HEK293 (cell line): ENCODE measurements at regions of chr17 and their contacts with region 1.

Region 1: GRCh38 chr17:38982858-38983746 is 15.9 kb upstream of the FBXO47 start:
- H3K4me3 ChIP-seq: no peak overlapping the region
- H3K27ac ChIP-seq: no peak overlapping the region
- H3K4me1 ChIP-seq: peaks cover 6% of the 10 kb centered on the region
- CTCF ChIP-seq: peak; percentile 63; the same call in 1 of the 2 replicates

Region 2: GRCh38 chr17:38868817-38869525 is 114.1 kb before region 1 on chr17:
- CTCF ChIA-PET with region 1: interaction called, 24 read pairs
- POLR2A ChIA-PET with region 1: interaction called, 20 read pairs
- H3K4me3 ChIP-seq: peak overlapping the region; percentile 94
- H3K27ac ChIP-seq: peak overlapping the region; percentile 96
- H3K4me1 ChIP-seq: peaks cover 9% of the 10 kb centered on the region
- CTCF ChIP-seq: peak; percentile 93

Region 3: DNA sequence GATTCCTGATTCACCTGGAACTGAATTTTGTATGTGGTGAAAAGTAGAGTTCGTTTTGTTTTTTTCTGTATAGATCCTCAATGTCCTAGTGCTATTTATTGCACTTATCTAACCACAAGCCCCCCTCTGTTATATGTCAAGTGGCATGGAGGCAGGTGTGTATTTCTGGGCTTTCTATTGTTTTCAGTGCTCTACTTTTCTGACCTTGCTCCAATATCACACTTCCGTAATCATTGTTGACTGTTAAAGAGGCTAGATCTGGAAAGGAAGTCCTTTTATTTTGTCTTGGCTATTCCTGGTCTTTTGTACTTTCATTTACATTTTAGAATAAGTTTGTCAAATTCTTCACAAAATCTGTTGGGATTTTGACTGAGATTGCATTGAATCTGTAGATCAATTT is 10.9 kb after region 1 on chr17:
- CTCF ChIA-PET with region 1: interaction called, 26 read pairs
- POLR2A ChIA-PET with region 1: no interaction called
- H3K4me3 ChIP-seq: no peak overlapping the region
- H3K27ac ChIP-seq: no peak overlapping the region
- H3K4me1 ChIP-seq: no peaks in the 10 kb centered on the region
- CTCF ChIP-seq: no peak

Region 4: DNA sequence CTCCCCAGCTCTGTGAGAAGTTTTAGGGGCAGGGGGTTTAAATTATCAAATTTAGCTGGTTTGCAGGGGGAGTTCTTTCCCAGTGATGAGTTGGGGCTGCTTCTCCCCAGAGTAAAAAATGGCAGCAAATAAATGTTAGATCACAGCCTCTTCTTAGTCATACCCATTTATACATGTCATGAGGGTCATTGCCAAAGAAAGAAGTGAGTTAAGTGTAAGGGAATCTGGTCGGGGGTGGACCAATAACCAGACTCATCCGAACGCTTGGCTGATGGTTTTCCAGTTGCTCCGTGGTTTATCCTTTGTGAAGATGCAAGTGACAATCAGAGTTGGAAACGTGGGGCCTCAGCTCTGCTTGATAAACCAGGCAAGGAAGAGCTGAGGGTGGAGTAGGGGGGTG is 81.3 kb after region 1 on chr17:
- CTCF ChIA-PET with region 1: interaction called, 20 read pairs
- POLR2A ChIA-PET with region 1: no interaction called
- H3K4me3 ChIP-seq: no peak overlapping the region
- H3K27ac ChIP-seq: no peak overlapping the region
- H3K4me1 ChIP-seq: peaks cover 19% of the 10 kb centered on the region
- CTCF ChIP-seq: no peak

Region 5: DNA sequence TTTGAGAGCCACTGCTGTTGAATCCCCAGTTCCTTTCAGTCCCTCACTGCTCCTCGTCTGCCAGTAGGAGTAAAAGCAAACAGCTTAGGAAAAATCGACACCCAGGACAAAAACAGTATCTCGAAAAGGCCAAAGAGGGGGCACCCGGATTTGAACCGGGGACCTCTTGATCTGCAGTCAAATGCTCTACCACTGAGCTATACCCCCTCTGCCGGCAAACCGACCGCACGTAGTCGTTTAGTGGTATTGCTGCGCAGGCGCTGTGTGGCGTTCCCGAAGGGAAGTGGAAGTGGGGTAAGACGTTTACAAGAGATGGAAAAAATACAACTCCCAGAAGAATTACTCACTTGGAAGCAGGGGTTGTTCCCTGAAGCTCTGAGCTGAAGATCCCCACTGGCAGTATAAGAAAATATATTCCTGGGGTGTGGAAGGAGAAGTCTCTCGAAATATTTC is 170.5 kb after region 1 on chr17:
- CTCF ChIA-PET with region 1: interaction called, 266 read pairs
- POLR2A ChIA-PET with region 1: interaction called, 37 read pairs
- H3K4me3 ChIP-seq: peak overlapping the region; percentile 62
- H3K27ac ChIP-seq: peak overlapping the region; percentile 79
- H3K4me1 ChIP-seq: peaks cover 3% of the 10 kb centered on the region
- CTCF ChIP-seq: 0 out of 2 replicates have a peak, but pooled peaks have one; percentile 4

Region 6: GRCh38 chr17:39235555-39236449 is 252.7 kb after region 1 on chr17:
- CTCF ChIA-PET with region 1: interaction called, 13 read pairs
- POLR2A ChIA-PET with region 1: no interaction called
- H3K4me3 ChIP-seq: no peak overlapping the region
- H3K27ac ChIP-seq: no peak overlapping the region
- H3K4me1 ChIP-seq: peaks cover 10% of the 10 kb centered on the region
- CTCF ChIP-seq: peak; percentile 96